ENCODE measurements at regions of chr14 and their contacts with region 1.

Region 1: DNA sequence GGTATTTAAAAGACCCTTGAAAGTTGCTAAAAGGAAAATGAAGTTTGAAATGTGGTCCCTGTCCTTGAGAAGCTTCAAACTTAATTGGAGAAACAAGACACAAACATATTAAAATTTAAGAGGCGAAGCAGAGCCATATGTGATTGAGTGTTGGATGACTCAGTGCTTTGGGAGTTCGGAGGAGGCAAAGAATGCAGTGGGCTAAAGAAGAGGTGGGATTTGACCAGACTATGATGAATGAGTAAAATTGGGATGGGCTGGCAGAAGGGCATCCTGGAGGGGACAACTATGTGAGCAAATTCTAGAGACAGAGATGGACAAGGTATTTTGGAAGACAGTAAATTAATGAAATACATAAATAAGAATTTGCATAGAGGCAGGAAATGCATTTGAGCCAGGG is 358.6 kb downstream of the EGLN3 start:
- DNase-seq: no peak
- ATAC-seq: no peak
- H3K4me3 ChIP-seq: no peak overlapping the region
- H3K27ac ChIP-seq: no peak overlapping the region
- H3K4me1 ChIP-seq: no peaks in the 10 kb centered on the region
- H3K27me3 ChIP-seq: no peaks in the 10 kb centered on the region

Region 2: DNA sequence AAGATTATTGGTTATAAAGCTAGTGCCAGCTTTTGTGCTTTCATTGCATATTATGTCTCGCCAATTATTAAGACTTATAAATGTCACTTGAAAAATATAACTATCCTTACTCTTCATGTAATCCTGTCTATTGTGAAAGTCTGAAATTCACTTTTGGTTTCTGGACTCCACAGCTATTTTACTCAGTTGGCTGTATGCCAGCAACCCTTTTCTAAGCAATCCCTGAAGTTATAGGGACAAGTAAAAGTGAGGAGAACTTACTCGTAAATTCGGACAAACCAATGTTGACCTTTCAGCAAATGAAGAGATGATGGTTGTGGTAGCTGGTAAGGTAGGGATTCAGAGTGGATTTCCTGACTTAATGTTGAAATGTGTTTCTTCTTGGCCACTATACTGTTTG is 457.3 kb before region 1 on chr14:
- intact Hi-C with region 1: loop called in 1 of 4 experiments (anchors 5 kb)
- DNase-seq: no peak
- ATAC-seq: no peak
- H3K4me3 ChIP-seq: no peak overlapping the region
- H3K27ac ChIP-seq: no peak overlapping the region
- H3K4me1 ChIP-seq: no peaks in the 10 kb centered on the region
- H3K27me3 ChIP-seq: no peaks in the 10 kb centered on the region